Left ventricle myocardium inferior (tissue), 1 donor: ENCODE measurements at regions of chr6 and their contacts with region 1.

Region 1: DNA sequence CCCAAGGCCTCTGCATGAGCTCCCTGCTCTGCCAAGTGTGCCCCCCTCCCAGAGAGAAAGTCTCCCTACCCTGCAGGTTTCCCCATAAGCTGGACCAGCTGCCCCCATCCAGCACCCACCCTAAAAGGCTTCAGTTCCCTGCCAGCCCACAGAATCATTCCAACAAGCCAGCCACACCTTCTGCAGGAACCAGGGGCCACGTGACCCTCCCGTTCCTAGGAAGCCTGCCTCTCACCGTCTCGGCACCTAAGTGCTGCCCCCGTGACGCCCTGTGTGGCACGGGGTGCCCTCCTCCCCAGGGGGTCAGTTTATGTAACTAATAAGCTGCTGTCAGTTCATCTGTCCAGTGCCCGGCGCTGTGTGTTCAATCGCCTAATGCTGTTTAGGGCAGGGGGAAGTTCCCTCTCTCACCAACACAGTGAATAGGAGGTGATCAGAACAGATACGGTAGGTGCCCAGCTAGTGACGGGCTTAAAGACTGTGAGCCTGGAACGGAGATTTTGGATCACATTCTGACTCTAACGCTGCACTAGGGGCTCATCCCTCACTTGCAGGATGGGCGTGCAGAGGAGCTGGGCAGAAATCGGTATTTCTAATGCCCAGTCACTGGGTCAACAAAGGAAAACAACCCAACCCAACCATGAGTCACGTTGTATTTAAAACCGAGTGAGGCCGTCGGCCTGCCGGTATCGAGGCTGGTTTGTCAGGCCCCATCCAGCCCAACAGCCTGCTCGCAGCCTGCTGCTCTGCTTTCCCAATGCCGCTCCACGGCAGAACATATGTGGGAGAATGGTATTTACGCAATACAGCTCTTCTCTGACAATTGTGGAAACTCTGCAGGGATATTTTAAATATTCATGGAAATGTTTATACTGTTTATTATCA is 56.0 kb downstream of the RAMACL start:
- DNase-seq: no peak
- H3K4me3 ChIP-seq: no peak overlapping the region
- H3K27ac ChIP-seq: no peak overlapping the region
- H3K4me1 ChIP-seq: no peaks in the 10 kb centered on the region
- H3K27me3 ChIP-seq: no peaks in the 10 kb centered on the region
- CTCF ChIP-seq: no peak

Region 2: GRCh38 chr6:166598441-166599138 is 68.1 kb after region 1 on chr6:
- intact Hi-C with region 1: no loop called
- DNase-seq: peak; percentile 51
- H3K4me3 ChIP-seq: no peak overlapping the region
- H3K27ac ChIP-seq: peak overlapping the region; percentile 89
- H3K4me1 ChIP-seq: peaks cover 53% of the 10 kb centered on the region
- H3K27me3 ChIP-seq: no peaks in the 10 kb centered on the region
- CTCF ChIP-seq: no peak

Region 3: DNA sequence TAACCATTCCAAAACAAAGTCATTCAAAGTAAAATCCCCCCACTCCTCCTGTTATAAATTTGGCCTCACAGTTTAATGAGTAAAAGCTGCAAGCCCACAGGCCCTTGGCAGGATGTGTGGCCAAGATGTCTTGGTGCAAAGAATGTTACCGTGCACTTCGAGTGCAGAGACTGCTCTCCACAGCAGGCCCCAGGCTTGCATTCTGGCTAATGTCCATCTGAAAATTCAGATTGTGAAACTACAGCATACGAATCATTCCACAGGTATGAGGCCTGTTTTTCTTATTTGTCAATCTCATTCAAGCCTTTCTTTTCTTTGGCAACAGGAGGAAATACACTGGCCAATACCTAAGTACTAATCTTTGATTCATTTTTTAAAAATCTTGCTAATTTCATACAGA is 89.5 kb after region 1 on chr6:
- intact Hi-C with region 1: no loop called
- DNase-seq: no peak
- H3K4me3 ChIP-seq: no peak overlapping the region
- H3K27ac ChIP-seq: peak overlapping the region; percentile 68
- H3K4me1 ChIP-seq: peaks cover 79% of the 10 kb centered on the region
- H3K27me3 ChIP-seq: no peaks in the 10 kb centered on the region
- CTCF ChIP-seq: no peak

Region 4: GRCh38 chr6:166656230-166657149 is 126.0 kb after region 1 on chr6:
- intact Hi-C with region 1: no loop called
- DNase-seq: no peak
- H3K4me3 ChIP-seq: no peak overlapping the region
- H3K27ac ChIP-seq: no peak overlapping the region
- H3K4me1 ChIP-seq: no peaks in the 10 kb centered on the region
- H3K27me3 ChIP-seq: peaks cover 21% of the 10 kb centered on the region
- CTCF ChIP-seq: no peak

Region 5: GRCh38 chr6:166760288-166760687 is 229.8 kb after region 1 on chr6:
- intact Hi-C with region 1: loop called (anchors 10 kb)
- DNase-seq: no peak
- H3K4me3 ChIP-seq: no peak overlapping the region
- H3K27ac ChIP-seq: no peak overlapping the region
- H3K4me1 ChIP-seq: peaks cover 11% of the 10 kb centered on the region
- H3K27me3 ChIP-seq: peaks cover 18% of the 10 kb centered on the region
- CTCF ChIP-seq: no peak

Region 6: DNA sequence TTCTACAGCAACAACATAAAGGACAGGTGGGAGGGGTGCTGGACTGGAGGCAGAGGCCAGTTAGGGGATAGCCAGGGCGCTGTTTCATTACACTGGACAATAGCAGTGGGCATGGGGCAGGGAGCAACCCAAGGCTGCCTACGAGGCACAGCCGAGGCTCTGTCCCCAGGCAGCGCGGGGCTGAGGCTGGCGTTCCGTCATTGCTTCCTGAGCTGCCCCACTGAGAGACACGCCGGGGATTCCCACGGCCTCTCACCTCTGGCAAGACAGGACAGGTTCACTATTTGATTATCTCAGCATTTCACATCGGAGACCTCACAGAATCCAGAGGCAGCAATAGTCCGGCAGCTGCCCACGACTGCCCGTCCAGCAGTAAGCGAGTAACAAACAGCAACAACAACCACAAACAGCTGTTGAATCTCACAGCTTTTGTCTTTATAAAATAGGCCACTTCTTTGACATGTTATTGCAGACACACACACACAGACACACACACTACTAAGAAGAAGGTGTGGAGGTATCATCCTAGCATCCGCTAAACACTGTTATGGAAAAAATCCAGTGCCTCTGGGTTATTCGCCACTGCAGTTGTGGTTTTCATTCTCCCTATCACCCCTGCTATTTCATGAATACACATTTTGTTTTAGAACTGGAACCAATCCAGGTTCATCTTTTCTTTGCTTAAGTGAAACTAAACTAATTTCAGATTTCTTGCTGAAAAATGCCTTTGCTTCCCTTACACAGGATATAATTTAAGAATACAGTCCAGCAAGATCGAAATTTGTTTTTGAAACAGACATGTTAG is 1486.5 kb after region 1 on chr6:
- intact Hi-C with region 1: no loop called
- DNase-seq: no peak
- H3K4me3 ChIP-seq: no peak overlapping the region
- H3K27ac ChIP-seq: no peak overlapping the region
- H3K4me1 ChIP-seq: peaks cover 24% of the 10 kb centered on the region
- H3K27me3 ChIP-seq: no peaks in the 10 kb centered on the region
- CTCF ChIP-seq: no peak